ENCODE measurements at regions of chr1 and their contacts with region 1.

Region 1: DNA sequence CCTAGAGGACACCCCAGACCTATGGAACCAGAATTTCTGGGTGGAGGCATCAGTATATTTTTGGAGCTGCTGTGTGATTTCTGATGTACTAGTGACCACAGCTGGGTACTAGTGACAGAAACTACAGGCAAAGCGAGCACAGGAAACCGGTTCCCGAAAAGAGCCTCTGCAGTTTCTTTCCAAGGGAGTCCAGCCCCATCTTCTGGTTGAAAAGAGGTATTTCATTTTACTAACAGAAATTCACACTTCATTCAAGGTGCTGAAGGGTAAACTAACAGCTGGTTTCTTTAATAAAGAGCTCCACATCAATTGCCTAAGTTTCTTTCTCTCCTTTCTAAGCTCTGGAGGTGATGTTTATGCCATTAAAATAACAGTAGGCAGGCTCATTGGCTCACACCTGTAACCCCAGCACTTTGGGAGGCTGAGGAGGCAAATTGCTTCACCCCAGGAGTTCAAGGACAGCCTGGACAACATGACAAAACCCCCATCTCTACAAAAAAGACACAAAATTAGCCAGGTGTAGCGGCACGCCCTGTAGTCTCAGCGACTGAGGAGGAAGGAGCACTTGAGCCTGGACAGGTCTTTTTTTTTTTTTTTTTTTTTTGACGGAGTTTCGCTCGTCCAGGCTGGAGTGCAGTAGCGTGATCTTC is 22.0 kb downstream of the THAP3 start:
- DNase-seq: peak in 1 of 10 donors; percentile 58
- H3K4me3 ChIP-seq: no peak overlapping the region
- H3K27ac ChIP-seq: no peak overlapping the region
- H3K27me3 ChIP-seq: no peaks in the 10 kb centered on the region
- CTCF ChIP-seq: peak; percentile 41 to 80 (median 64)

Region 2: GRCh38 chr1:6489799-6490180 is 156.8 kb before region 1 on chr1:
- intact Hi-C with region 1: loop called (anchors 2 to 10 kb)
- DNase-seq: peak in 7 of 10 donors; percentile 55 to 84 (median 70)
- H3K4me3 ChIP-seq: peak overlapping the region; percentile 41 to 80 (median 65)
- H3K27ac ChIP-seq: peak overlapping the region in 4 of 59 donors; percentile 5 to 71 (median 44)
- H3K27me3 ChIP-seq: peaks cover 0 to 19% (median 4%) of the 10 kb centered on the region in 45 donors
- CTCF ChIP-seq: peak; percentile 53 to 90 (median 82)